Ascending aorta (tissue), 2 donors: ENCODE measurements at regions of chr9 and their contacts with region 1.

Region 1: DNA sequence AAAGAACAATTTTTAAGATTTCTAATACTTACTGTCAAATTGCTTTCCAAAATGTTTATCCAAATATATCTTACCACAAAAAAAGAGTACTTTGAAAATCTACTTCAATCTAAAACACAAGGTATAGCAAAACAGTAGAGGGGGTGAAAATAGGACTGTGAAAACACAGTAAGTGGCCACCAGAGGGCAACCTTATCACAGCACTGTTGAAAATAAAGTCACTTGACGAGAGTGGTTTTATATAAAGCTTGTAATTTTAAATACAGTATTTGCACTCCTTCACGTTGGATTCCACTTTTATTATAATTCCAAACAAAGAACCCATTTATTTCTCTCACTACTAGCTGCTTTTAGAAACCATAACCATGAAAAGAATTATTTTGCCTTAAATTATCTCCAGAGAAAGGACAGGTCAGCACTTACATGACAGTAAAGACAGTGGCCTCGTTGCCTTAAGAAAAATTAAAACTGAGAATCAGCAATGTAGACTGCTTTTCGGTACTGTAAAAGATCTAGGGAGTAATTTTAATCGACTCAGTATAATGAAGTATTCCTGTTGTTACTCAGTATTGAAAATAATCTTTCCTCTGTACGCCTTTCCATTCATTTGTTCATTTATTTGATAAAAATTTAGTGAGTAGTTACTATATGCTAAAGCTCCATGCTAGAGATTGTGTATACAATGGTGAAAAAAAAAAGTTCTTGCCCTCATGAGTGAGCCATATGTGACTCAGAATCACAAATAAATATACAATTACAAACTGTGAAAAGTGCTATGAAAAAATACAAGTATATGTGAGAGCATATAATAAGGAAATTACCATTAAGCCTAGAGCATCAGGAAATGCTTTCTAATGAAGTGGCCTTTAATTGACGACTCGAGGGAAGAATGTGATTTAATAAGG is 40.0 kb upstream of the CDK5RAP2 start:
- DNase-seq: peak in 1 of 2 donors; percentile 74
- H3K4me3 ChIP-seq: no peak overlapping the region
- H3K27ac ChIP-seq: no peak overlapping the region
- H3K4me1 ChIP-seq: no peaks in the 10 kb centered on the region
- H3K27me3 ChIP-seq: no peaks in the 10 kb centered on the region
- CTCF ChIP-seq: peak; percentile 65 to 85 (median 68)

Region 2: GRCh38 chr9:120742951-120743416 is 123.0 kb after region 1 on chr9:
- intact Hi-C with region 1: loop called (anchors 10 kb)
- DNase-seq: no peak
- H3K4me3 ChIP-seq: no peak overlapping the region
- H3K27ac ChIP-seq: no peak overlapping the region
- H3K4me1 ChIP-seq: no peaks in the 10 kb centered on the region
- H3K27me3 ChIP-seq: no peaks in the 10 kb centered on the region
- CTCF ChIP-seq: peak in 2 of 3 experiments; percentile 26 to 41